H1 (cell line): ENCODE measurements at regions of chr14 and their contacts with region 1.

Region 1: DNA sequence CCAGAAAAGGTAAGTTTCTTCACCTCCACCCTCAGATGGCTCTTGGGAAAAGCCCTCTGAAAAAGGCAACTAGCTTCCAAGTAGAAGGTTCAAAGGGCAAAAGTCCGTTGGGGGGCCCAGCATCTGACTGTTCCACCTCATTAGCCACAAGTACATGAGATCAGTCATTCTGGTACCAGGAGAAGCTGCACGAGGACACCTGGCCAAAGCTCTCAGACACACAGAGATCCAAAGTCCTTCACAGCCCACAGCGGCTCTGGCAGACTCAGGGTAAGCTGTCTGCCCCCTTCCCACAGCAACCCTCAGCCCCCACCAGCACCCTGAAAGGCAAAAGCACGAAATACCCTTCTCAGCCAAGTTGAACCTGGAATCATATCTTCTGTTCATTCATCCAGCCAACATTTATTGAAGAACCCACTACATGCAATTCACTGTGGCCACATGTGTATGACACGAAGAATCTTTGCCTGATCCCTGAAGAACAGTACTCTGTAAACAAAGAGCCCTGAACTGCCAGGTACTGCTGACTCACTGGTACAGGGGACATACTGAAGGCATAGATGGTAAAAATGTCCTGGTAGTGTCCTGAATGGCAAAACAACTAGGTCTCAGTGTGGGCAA is 19.0 kb downstream of the SLC7A7 start:
- DNase-seq: no peak
- H3K4me3 ChIP-seq: no peak overlapping the region
- H3K27ac ChIP-seq: 0 out of 2 replicates have a peak overlapping the region, but pooled peaks have one; percentile 19
- H3K4me1 ChIP-seq: peaks cover 2 to 11% (median 6%) of the 10 kb centered on the region in 4 experiments
- H3K27me3 ChIP-seq: no peaks in the 10 kb centered on the region
- CTCF ChIP-seq: no peak
- EP300 ChIP-seq: no peak
- POLR2A ChIP-seq: no peak
- RAD21 ChIP-seq: no peak

Region 2: DNA sequence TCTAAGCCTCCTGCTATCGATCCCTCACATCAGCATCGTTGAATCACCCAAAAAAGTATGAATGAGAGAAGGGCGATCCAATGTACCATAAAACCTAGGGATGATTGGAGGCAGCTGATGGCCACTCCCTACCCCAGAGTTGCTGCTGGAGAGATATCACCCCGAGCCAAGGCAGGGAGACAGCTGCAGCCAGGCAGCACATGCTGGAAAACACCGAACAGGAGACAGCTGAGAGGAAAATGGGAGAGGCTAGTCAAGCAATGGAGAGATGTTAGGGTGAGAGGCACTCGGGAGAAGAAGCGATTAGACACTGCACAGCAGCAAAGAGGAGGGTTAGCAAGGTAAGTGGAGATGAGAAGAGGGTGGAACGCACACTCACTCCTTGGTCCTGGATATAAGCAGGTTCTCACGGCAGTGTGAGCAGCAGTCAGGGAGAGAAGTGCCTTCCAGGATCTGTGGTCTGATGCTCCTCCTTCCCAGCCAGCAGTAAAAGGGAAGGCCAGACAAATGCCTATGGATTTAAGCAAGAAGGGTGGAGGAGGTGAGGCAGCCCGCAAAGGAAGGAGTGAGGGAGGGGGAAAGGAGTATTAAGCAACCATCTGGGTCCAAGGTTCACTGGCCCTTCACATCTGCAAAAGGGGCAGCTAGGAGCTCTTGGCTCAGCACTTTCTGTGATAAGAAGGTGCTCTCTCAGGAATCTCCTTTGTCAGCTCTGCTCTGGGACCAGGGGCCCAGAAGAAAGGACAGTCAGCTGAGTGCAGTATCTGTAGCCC is 18.9 kb after region 1 on chr14 and contains the start of gene SLC7A7:
- CTCF ChIA-PET with region 1: interaction called, 13 read pairs
- POLR2A ChIA-PET with region 1: interaction called, 9 read pairs
- DNase-seq: no peak
- H3K4me3 ChIP-seq: no peak within 1 kb of the TSS
- H3K27ac ChIP-seq: 0 out of 2 replicates have a peak within 1 kb of the TSS, but pooled peaks have one; percentile 11
- H3K4me1 ChIP-seq: peaks cover 13 to 29% (median 20%) of the 10 kb centered on the region in 4 experiments
- H3K27me3 ChIP-seq: no peaks in the 10 kb centered on the region
- CTCF ChIP-seq: no peak
- EP300 ChIP-seq: no peak
- POLR2A ChIP-seq: no peak
- RAD21 ChIP-seq: no peak
- total RNA-seq, gene SLC7A7: 5.8 and 6.3 TPM in 2 replicates

Region 3: GRCh38 chr14:23020143-23021128 is 224.2 kb after region 1 on chr14:
- CTCF ChIA-PET with region 1: no interaction called
- POLR2A ChIA-PET with region 1: no interaction called
- DNase-seq: no peak
- H3K4me3 ChIP-seq: no peak overlapping the region
- H3K27ac ChIP-seq: no peak overlapping the region
- H3K4me1 ChIP-seq: peaks cover 0 to 3% (median under 1%) of the 10 kb centered on the region in 4 experiments; a peak in 1 of 7 replicates
- H3K27me3 ChIP-seq: no peaks in the 10 kb centered on the region
- CTCF ChIP-seq: no peak
- EP300 ChIP-seq: no peak
- POLR2A ChIP-seq: no peak
- RAD21 ChIP-seq: no peak